ENCODE measurements at regions of chr5 and their contacts with region 1.

Region 1: DNA sequence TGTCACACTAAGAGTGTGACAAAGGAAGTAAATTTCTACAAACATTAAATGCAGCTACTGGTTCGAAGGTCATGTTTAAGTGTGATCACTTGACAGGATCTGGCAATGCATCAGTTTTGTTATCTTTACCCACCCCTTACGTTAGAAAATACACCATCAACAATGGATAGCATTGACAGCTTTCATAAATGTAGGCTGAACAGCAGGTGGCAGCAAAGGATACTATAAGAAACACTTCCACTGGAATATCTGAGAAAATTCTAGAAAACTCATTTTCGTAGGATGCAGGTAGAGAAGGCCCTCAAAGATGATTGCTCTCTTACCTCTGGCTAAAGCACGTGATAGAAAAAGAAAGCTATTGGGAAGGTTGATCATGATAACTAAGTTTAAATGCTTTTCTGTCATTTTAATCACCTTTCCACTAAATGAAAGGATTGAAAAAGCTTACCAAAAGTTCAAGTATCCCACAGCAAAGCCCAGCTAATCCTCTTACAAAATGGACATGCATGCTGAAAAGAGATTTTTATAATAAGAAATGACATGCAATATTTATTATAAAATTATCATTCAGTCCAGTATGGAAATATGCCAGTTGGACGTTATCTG is 292.5 kb downstream of the PARP8 start:
- DNase-seq: peak; percentile 24 to 64 (median 39)
- ATAC-seq: no peak
- H3K4me3 ChIP-seq: no peak overlapping the region
- H3K27ac ChIP-seq: no peak overlapping the region
- H3K4me1 ChIP-seq: peaks cover 11% of the 10 kb centered on the region
- H3K27me3 ChIP-seq: peaks cover 0 to 6% of the 10 kb centered on the region in 2 donors
- CTCF ChIP-seq: peak in 6 of 7 experiments; percentile 39 to 66 (median 55)
- POLR2A ChIP-seq: no peak

Region 2: DNA sequence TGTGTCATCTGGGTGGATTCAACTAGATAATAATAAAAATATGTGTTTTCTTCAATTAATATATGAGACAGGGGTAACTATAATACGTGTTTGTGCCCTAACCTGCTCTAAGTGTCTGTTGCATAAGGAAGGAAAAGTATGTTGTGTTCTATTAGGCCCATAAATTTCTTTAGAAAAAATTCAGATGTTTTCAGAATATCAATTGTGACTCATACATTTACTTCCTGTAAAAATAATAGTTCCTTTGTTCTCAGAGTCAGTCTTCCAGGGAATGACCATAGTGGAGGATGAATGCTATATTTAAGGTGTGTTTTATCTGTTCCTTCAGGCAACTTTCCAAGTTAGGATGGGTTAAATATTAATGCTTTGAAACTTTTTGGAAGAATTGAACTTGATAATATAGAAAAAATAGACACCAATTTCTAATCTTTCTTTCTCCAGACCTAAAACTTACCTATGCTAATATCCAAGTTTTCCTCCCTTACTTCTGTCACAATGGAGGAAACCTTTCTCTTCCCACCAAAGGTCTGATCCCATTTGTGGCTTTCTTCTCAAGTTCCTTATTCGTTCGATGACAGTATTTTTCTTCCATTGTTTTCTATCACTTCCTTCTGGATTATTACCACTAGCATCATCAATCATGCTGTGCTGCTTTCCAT is 474.2 kb after region 1 on chr5:
- intact Hi-C with region 1: no loop called
- DNase-seq: no peak
- ATAC-seq: no peak
- H3K4me3 ChIP-seq: no peak overlapping the region
- H3K27ac ChIP-seq: no peak overlapping the region
- H3K4me1 ChIP-seq: no peaks in the 10 kb centered on the region
- H3K27me3 ChIP-seq: no peaks in the 10 kb centered on the region
- CTCF ChIP-seq: no peak
- POLR2A ChIP-seq: no peak

Region 3: DNA sequence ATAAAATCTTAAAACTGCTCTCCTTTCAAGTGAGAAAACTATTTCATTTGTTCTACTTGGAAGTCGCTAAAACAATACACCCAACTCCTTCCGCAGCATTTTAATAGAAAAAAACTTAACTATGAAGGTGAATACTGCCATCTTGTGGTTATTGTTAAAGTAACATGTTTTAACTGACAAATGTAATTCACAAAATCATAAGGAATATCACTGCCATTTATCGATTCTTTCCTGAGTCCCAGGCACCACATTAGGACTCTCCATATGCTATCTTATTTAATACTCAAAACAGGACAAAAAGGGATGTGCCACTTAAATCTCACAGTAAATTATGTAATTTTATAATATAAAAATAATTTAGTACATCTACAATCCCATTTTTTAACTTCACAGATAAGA is 1698.3 kb after region 1 on chr5:
- intact Hi-C with region 1: loop called (anchors 10 kb)
- DNase-seq: no peak
- ATAC-seq: no peak
- H3K4me3 ChIP-seq: no peak overlapping the region
- H3K27ac ChIP-seq: no peak overlapping the region
- H3K4me1 ChIP-seq: peaks cover 4% of the 10 kb centered on the region
- H3K27me3 ChIP-seq: no peaks in the 10 kb centered on the region
- CTCF ChIP-seq: peak; percentile 21 to 61 (median 54)
- POLR2A ChIP-seq: no peak

Measured in body of pancreas (tissue), 4 donors.